MCF 10A (cell line): ENCODE measurements at regions of chr21 and their contacts with region 1.

Region 1: DNA sequence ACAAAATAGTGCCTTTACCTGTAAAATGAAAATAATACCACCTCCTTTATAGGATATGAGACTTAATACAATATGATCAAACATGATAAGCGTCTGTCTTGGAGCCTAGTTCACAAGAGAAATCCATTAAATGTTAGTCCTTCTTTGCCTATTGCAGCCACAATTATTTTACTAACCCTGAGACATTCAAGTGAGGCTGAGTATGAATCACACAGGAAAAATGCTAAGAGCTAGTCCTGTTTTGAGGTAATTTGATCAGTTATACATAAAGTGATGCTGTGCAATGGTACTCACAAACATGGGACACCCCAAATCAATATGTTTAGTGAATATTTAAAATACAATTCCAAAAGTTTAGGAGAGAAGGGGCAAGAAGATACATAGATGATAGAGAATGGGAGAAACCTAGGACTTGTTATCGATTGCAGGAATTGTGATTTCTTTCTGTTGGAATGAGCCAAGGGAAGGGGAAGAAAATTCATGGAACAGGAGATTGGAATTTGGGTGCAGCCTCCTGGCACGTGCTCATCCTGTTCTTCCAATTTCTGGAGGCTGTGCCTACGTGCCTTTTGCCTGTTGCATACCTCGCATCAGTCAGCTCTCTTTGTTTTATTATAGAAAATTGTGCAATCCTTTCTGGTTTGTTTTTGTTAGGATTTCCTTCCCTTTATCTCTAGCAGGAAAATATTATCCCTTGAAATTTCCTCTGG is 39.9 kb upstream of the BACH1 start:
- DNase-seq: peak; percentile 89
- H3K4me3 Mint-ChIP-seq: peak overlapping the region; percentile 47
- H3K27ac Mint-ChIP-seq: peak overlapping the region; percentile 95
- H3K4me1 Mint-ChIP-seq: peaks cover 55% of the 10 kb centered on the region
- H3K27me3 Mint-ChIP-seq: no peaks in the 10 kb centered on the region
- CTCF ChIP-seq: no peak

Region 2: GRCh38 chr21:28904961-28905435 is 353.8 kb before region 1 on chr21:
- CTCF ChIA-PET with region 1: no interaction called
- POLR2A ChIA-PET with region 1: no interaction called
- intact Hi-C with region 1: no loop called
- DNase-seq: no peak
- H3K4me3 Mint-ChIP-seq: no peak overlapping the region
- H3K27ac Mint-ChIP-seq: no peak overlapping the region
- H3K4me1 Mint-ChIP-seq: no peaks in the 10 kb centered on the region
- H3K27me3 Mint-ChIP-seq: no peaks in the 10 kb centered on the region
- CTCF ChIP-seq: no peak

Region 3: GRCh38 chr21:29155118-29155932 is 103.5 kb before region 1 on chr21:
- CTCF ChIA-PET with region 1: no interaction called
- POLR2A ChIA-PET with region 1: interaction called, 12 read pairs
- intact Hi-C with region 1: no loop called
- DNase-seq: peak; percentile 52
- H3K4me3 Mint-ChIP-seq: peak overlapping the region; percentile 58
- H3K27ac Mint-ChIP-seq: peak overlapping the region; percentile 39
- H3K4me1 Mint-ChIP-seq: peaks cover 25% of the 10 kb centered on the region
- H3K27me3 Mint-ChIP-seq: no peaks in the 10 kb centered on the region
- CTCF ChIP-seq: no peak

Region 4: GRCh38 chr21:29187944-29188343 is 70.8 kb before region 1 on chr21:
- CTCF ChIA-PET with region 1: no interaction called
- POLR2A ChIA-PET with region 1: interaction called, 120 read pairs
- intact Hi-C with region 1: no loop called
- DNase-seq: peak; percentile 95
- H3K4me3 Mint-ChIP-seq: peak overlapping the region; percentile 51
- H3K27ac Mint-ChIP-seq: peak overlapping the region; percentile 84
- H3K4me1 Mint-ChIP-seq: peaks cover 43% of the 10 kb centered on the region
- H3K27me3 Mint-ChIP-seq: no peaks in the 10 kb centered on the region
- CTCF ChIP-seq: no peak

Region 5: GRCh38 chr21:29232601-29233546 is 25.9 kb before region 1 on chr21:
- CTCF ChIA-PET with region 1: interaction called, 4 read pairs
- POLR2A ChIA-PET with region 1: interaction called, 115 read pairs
- intact Hi-C with region 1: loop called (anchors 2 kb)
- DNase-seq: peak; percentile 56
- H3K4me3 Mint-ChIP-seq: no peak overlapping the region
- H3K27ac Mint-ChIP-seq: peak overlapping the region; percentile 89
- H3K4me1 Mint-ChIP-seq: peaks cover 40% of the 10 kb centered on the region
- H3K27me3 Mint-ChIP-seq: no peaks in the 10 kb centered on the region
- CTCF ChIP-seq: no peak

Region 6: GRCh38 chr21:29245104-29245643 is 13.6 kb before region 1 on chr21:
- CTCF ChIA-PET with region 1: interaction called, 4 read pairs
- POLR2A ChIA-PET with region 1: interaction called, 37 read pairs
- intact Hi-C with region 1: no loop called
- DNase-seq: no peak
- H3K4me3 Mint-ChIP-seq: no peak overlapping the region
- H3K27ac Mint-ChIP-seq: no peak overlapping the region
- H3K4me1 Mint-ChIP-seq: no peaks in the 10 kb centered on the region
- H3K27me3 Mint-ChIP-seq: no peaks in the 10 kb centered on the region
- CTCF ChIP-seq: no peak

Region 7: GRCh38 chr21:29287383-29287782 is 28.6 kb after region 1 on chr21:
- CTCF ChIA-PET with region 1: interaction called, 9 read pairs
- POLR2A ChIA-PET with region 1: interaction called, 28 read pairs
- intact Hi-C with region 1: no loop called
- DNase-seq: no peak
- H3K4me3 Mint-ChIP-seq: no peak overlapping the region
- H3K27ac Mint-ChIP-seq: no peak overlapping the region
- H3K4me1 Mint-ChIP-seq: peaks cover 17% of the 10 kb centered on the region
- H3K27me3 Mint-ChIP-seq: no peaks in the 10 kb centered on the region
- CTCF ChIP-seq: no peak

Region 8: DNA sequence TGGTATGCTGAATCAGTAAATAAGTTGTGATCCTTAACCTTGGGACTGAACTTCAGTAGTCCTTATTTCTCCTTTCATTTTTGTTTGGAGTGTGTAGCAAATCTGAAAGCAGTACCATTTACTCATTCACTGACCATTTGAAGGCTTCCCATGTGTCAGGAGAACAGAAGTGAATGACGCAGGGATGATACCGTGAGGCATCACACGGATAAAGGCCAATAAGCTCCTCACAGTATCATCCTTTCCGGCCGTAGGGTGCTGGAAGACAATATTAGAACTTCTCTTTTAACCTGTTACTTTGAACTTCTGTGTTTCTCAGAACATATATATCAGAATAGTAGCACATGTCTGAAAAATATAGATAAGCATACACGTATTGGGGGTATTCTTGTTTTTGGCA is 61.2 kb after region 1 on chr21:
- CTCF ChIA-PET with region 1: no interaction called
- POLR2A ChIA-PET with region 1: no interaction called
- intact Hi-C with region 1: no loop called
- DNase-seq: no peak
- H3K4me3 Mint-ChIP-seq: no peak overlapping the region
- H3K27ac Mint-ChIP-seq: peak overlapping the region; percentile 9
- H3K4me1 Mint-ChIP-seq: peaks cover 37% of the 10 kb centered on the region
- H3K27me3 Mint-ChIP-seq: no peaks in the 10 kb centered on the region
- CTCF ChIP-seq: no peak

Region 9: GRCh38 chr21:29490016-29490415 is 231.2 kb after region 1 on chr21:
- CTCF ChIA-PET with region 1: no interaction called
- POLR2A ChIA-PET with region 1: no interaction called
- intact Hi-C with region 1: no loop called
- DNase-seq: no peak
- H3K4me3 Mint-ChIP-seq: no peak overlapping the region
- H3K27ac Mint-ChIP-seq: no peak overlapping the region
- H3K4me1 Mint-ChIP-seq: no peaks in the 10 kb centered on the region
- H3K27me3 Mint-ChIP-seq: no peaks in the 10 kb centered on the region
- CTCF ChIP-seq: no peak